ENCODE measurements at regions of chr12 and their contacts with region 1.

Region 1: DNA sequence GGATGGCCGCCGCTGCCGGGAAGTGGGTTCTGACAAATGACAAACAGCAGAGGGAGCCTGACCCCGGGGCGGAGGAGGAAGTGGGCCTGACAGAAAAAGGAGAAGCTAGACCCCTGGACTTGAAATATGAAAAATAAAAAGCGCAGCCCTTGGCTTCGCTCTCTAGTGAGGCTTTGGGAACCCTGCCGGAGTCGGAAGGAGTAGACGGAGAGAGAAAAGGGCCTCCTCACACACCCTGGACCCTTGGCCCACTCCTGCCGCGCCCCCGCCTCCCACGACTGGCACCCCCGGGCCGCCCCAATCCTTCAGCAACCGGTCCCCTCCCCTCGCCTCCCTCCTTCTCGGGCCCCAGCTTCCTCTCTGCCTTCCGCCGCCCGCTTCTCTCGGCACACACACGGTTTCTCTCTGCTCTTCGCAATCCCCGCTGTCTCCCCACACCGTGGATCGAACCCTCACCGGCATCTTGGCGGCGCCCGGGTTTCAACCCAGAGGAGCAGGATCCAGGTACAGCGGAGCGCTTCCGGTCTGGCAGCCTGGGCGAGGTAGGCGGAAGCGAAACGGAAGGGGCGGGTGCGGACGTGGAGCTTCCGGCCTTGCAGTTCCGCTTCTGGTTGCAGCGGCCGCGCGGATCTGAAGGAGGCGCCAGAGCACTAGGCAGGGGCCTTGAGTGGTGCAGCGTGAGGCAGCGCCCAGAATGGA is at the start of gene ARPC3:
- DNase-seq: peak; percentile 98
- ATAC-seq: peak; percentile 97
- H3K4me3 Mint-ChIP-seq: peak within 1 kb of the TSS; percentile 100
- H3K27ac Mint-ChIP-seq: peak within 1 kb of the TSS; percentile 100
- H3K4me1 Mint-ChIP-seq: peaks cover 45% of the 10 kb centered on the region
- H3K27me3 Mint-ChIP-seq: no peaks in the 10 kb centered on the region
- total RNA-seq, gene ARPC3: 437 to 458 TPM

Region 2: DNA sequence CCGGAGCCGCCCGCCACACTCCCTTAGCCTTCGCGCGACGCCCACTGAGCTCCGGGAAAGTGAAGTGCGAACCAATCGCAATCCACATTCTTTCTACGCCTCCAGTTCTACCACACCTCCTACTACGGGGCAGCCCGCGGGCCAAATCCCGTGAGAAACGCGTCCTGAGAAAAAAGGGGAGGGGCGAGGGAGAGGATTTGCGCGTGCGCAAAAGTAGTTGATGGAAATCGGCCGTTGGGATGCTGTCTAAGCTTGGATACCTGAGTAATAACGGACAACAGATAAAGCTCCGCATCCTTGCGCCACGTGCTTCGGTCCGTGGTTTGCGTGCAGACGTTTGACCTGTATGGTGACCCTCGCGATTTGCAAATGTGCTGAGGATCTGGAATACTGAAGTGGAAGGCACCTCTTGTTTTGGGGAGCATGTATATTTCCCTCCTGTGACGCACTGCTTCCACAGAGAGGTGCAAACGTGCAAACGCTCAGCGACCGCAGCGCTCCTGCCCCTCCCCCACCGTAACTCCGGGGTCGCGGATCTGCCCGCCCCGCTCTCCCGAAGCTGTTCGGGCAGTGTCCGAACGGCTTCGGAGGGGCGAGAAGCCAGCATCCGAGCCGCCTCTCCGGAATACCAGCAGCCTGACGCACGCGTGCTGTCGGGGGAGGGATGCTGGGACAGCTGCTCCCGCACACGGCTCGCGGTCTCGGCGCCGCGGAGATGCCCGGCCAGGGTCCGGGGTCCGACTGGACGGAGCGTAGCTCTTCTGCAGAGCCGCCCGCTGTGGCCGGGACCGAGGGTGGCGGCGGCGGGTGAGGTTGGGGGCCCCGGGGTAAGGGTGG is 18.5 kb after region 1 on chr12 and contains the starts of genes FAM216A and GPN3:
- CTCF ChIA-PET with region 1: interaction called, 91 read pairs
- POLR2A ChIA-PET with region 1: interaction called, 75 read pairs
- DNase-seq: peak; percentile 98
- ATAC-seq: peak; percentile 91
- H3K4me3 Mint-ChIP-seq: peak within 1 kb of the TSS; percentile 99
- H3K27ac Mint-ChIP-seq: peak within 1 kb of the TSS; percentile 94
- H3K4me1 Mint-ChIP-seq: peaks cover 28% of the 10 kb centered on the region
- H3K27me3 Mint-ChIP-seq: no peaks in the 10 kb centered on the region
- total RNA-seq, gene FAM216A: 20.5 to 22.9 TPM
- total RNA-seq, gene GPN3: 26.2 to 33.0 TPM

Region 3: DNA sequence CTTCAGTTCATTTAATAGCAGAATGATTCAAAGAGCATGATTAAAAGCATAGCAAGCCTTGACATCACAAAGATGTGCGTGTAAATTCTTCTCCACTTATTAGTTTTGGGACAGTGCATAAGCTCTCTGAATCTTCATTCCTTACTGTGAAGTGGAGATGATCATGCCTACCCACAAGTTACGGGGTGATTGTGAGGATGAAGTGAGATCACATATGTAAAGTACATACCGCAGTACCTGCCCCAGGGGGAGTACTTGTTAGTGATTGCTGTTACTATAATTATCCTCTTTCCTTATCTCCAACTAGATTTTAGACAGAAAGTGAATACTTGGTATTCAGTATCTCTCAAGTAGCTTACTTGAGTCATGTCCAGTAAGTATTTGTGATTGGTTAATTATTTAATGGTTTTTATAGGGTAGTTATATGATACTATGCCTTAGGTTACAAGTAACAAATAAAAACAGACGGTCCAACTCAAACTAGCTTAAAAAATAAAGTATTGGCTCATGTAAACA is 58.2 kb after region 1 on chr12:
- CTCF ChIA-PET with region 1: interaction called, 11 read pairs
- POLR2A ChIA-PET with region 1: interaction called, 28 read pairs
- DNase-seq: no peak
- ATAC-seq: no peak
- H3K4me3 Mint-ChIP-seq: no peak overlapping the region
- H3K27ac Mint-ChIP-seq: no peak overlapping the region
- H3K4me1 Mint-ChIP-seq: peaks cover 4% of the 10 kb centered on the region
- H3K27me3 Mint-ChIP-seq: peaks cover 9% of the 10 kb centered on the region

Region 4: GRCh38 chr12:110555577-110556406 is 105.8 kb after region 1 on chr12:
- CTCF ChIA-PET with region 1: interaction called, 12 read pairs
- POLR2A ChIA-PET with region 1: no interaction called
- DNase-seq: no peak
- ATAC-seq: no peak
- H3K4me3 Mint-ChIP-seq: no peak overlapping the region
- H3K27ac Mint-ChIP-seq: no peak overlapping the region
- H3K4me1 Mint-ChIP-seq: peaks cover 20% of the 10 kb centered on the region
- H3K27me3 Mint-ChIP-seq: no peaks in the 10 kb centered on the region

Region 5: DNA sequence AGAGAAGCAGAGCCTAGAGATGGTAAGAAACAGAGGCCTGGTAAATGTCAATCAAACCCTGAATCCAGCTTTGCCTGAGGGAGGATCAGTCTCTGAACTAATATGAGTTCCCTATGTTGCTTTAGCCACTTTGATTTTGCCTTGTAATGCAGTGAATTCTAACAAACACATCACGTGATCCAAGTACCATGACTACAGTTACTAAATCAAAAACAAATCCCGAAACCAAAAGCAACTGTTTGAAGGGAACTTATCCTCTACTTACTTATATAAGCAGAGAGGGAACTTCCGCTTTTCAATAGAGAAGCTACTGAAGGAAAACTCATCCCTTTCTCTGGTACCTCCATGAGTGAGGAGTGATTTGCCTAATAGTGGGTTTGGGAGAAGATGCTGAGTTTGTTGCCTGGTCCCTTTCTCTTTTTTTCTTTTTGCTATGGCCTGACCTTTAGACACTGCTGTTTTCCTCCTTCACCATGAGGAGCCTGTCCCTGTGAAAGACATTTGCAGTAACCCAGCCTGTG is 140.9 kb after region 1 on chr12:
- CTCF ChIA-PET with region 1: interaction called, 13 read pairs
- POLR2A ChIA-PET with region 1: interaction called, 7 read pairs
- DNase-seq: no peak
- ATAC-seq: peak; percentile 77
- H3K4me3 Mint-ChIP-seq: no peak overlapping the region
- H3K27ac Mint-ChIP-seq: peak overlapping the region; percentile 15
- H3K4me1 Mint-ChIP-seq: peaks cover 17% of the 10 kb centered on the region
- H3K27me3 Mint-ChIP-seq: no peaks in the 10 kb centered on the region

Measured in activated CD8-positive, alpha-beta T cell treated with anti-CD3 and anti-CD28 coated beads, Interleukin-2, amount 10 ng/mL, durations not matched to agents 7 days and 5 days (primary cell).